ENCODE measurements at regions of chr18 and their contacts with region 1.

Region 1: GRCh38 chr18:75923169-75923568 is 495.7 kb upstream of the SMIM21 start:
- DNase-seq: peak; percentile 78
- ATAC-seq: peak; percentile 97

Region 2: GRCh38 chr18:75966431-75966830 is 43.3 kb after region 1 on chr18:
- intact Hi-C with region 1: loop called (anchors 5 kb)
- DNase-seq: no peak
- ATAC-seq: peak; percentile 68